Right cardiac atrium (tissue), 5 donors: ENCODE measurements at regions of chr7 and their contacts with region 1.

Region 1: DNA sequence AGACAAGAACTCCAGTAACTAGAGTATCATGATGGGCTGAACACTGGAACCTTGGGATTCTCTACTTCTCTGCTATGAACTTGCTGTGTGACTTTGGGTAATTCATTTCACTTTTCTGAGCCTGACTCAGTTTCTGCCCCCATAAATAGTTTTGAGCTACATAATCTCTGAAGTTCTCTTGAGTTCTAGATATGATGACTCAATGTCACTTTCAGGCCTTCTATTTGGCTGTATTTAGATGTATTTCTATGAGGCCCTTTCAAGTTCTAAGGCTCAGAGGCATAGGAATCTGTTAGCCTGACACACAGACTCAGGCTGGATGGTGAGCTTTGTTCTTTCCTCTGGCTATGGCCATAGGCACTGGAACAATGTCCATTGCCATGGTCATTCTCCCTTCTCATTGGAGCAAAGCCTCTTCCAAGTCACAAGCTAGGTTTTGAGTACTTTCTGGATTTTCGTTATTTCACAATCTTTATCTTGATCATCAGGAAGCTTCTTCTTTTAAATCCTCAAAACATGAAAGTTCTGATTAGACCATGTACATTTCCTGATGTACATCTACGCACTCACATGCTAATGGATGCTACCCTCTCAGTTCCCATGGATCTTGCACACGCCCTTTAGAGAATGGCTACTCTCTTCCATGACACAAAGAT is 101.6 kb downstream of the TES start:
- DNase-seq: no peak
- ATAC-seq: no peak
- H3K4me3 ChIP-seq: no peak overlapping the region
- H3K27ac ChIP-seq: no peak overlapping the region
- H3K4me1 ChIP-seq: peaks cover 2% of the 10 kb centered on the region
- H3K27me3 ChIP-seq: no peaks in the 10 kb centered on the region

Region 2: GRCh38 chr7:116348331-116348730 is 36.4 kb after region 1 on chr7:
- intact Hi-C with region 1: loop called in 1 of 4 experiments (anchors 5 kb)
- DNase-seq: no peak
- ATAC-seq: no peak
- H3K4me3 ChIP-seq: no peak overlapping the region
- H3K27ac ChIP-seq: no peak overlapping the region
- H3K4me1 ChIP-seq: no peaks in the 10 kb centered on the region
- H3K27me3 ChIP-seq: no peaks in the 10 kb centered on the region